AG04449 (cell line): ENCODE measurements at regions of chr18 and their contacts with region 1.

Region 1: GRCh38 chr18:79378542-79379250 is 17.0 kb upstream of the NFATC1 start:
- DNase-seq: no peak
- H3K4me3 ChIP-seq: no peak overlapping the region
- CTCF ChIP-seq: peak; percentile 99

Region 2: GRCh38 chr18:79393635-79394533 is 15.2 kb after region 1 on chr18:
- CTCF ChIA-PET with region 1: interaction called, 70 read pairs
- POLR2A ChIA-PET with region 1: no interaction called
- DNase-seq: no peak
- H3K4me3 ChIP-seq: peak overlapping the region; percentile 49
- CTCF ChIP-seq: no peak

Region 3: DNA sequence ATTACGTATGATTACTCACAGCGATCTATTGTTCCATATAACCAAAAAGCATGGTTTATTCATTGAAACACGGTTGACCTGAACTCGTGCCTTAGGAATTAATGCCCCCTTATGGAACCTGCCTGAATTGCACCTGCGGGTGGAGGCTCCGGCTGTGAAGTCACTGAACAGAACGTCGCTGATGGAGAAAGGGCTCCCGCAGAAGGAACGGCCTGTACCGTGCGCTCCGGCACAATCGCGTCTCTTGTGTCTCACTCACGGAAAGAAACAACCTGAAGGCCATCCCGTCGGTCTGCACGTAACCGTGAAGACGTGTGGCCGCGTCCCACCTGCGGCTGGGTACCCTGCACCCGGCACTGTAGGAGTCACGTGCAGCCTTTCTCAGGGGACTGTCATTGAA is 150.2 kb after region 1 on chr18:
- CTCF ChIA-PET with region 1: interaction called, 294 read pairs
- POLR2A ChIA-PET with region 1: no interaction called
- DNase-seq: no peak
- H3K4me3 ChIP-seq: no peak overlapping the region
- CTCF ChIP-seq: peak; percentile 87

Region 4: DNA sequence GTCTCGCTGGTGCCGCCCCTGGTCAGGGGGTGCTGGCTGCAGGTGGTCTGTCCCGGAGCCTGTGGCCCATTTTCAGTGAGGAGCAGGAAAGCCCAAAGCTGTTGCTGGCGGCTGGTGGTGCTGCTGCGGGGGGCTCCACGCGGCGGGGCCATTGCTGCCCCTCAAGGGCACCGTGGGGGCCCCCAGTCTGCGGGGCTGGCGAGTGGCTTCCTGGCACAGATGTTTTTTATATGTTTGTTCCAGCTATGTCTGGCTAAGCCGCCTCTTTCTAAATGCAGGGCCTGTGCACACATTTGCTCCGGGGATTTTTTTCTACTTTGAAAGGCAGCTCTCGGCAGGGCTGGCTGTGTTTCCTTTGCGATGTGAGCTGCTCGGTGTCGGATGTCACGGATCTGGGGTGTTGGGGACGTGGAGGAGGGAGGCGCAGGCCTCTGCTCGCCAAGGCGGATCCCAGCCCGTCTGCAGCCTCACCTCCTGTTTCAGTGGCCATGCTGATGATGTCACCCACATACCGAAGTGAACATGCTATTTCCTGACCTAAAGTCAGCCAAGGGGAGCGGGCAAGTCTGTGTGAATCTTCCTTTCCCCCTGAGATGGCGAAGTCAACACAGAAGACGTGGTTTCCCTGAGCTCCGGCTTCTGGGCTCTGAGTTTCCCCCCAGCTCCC is 188.9 kb after region 1 on chr18:
- CTCF ChIA-PET with region 1: interaction called, 15 read pairs
- POLR2A ChIA-PET with region 1: no interaction called
- DNase-seq: peak; percentile 81
- H3K4me3 ChIP-seq: no peak overlapping the region
- CTCF ChIP-seq: no peak

Region 5: GRCh38 chr18:79644006-79644665 is 265.4 kb after region 1 on chr18:
- CTCF ChIA-PET with region 1: interaction called, 200 read pairs
- POLR2A ChIA-PET with region 1: no interaction called
- DNase-seq: no peak
- H3K4me3 ChIP-seq: no peak overlapping the region
- CTCF ChIP-seq: peak; percentile 98

Region 6: DNA sequence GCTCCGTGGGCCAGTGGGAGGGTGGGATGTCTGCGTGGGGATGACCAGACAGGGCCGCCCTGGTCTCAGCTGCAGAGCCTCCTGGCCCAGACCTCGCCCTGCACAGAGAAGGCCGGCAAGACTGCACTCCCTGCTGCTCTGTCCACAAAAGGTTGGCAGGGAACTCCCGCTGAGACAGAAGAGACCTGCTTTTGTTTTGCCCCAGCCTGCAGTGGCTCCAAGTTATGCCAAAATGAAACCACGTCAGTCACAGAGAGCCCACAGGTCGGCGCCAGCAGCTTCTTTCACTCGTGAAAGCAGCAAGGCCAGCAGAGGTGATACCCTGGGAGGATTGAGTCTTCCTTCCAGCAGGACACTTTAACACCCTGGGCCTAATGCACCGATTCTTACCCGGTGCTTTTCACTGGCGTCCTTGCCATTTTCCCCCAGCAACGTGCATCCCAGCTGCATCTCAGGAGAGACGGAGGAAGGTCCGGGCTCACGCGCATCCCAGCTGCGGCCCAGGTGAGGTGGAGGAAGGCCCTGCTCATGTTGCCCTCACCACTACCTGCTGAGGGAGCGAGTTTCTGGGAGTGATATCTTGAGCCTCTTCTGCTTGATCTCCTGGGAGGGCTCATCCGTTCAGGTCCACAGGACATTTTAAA is 278.8 kb after region 1 on chr18:
- CTCF ChIA-PET with region 1: interaction called, 13 read pairs
- POLR2A ChIA-PET with region 1: no interaction called
- DNase-seq: no peak
- H3K4me3 ChIP-seq: no peak overlapping the region
- CTCF ChIP-seq: no peak